Heart right ventricle (tissue), 16 donors: ENCODE measurements at regions of chr2 and their contacts with region 1.

Region 1: GRCh38 chr2:36613801-36614200 is 15.8 kb upstream of the FEZ2 start:
- DNase-seq: no peak
- ATAC-seq: no peak
- H3K4me3 ChIP-seq: no peak overlapping the region
- H3K27ac ChIP-seq: no peak overlapping the region
- H3K4me1 ChIP-seq: no peaks in the 10 kb centered on the region
- H3K27me3 ChIP-seq: no peaks in the 10 kb centered on the region
- CTCF ChIP-seq: no peak

Region 2: DNA sequence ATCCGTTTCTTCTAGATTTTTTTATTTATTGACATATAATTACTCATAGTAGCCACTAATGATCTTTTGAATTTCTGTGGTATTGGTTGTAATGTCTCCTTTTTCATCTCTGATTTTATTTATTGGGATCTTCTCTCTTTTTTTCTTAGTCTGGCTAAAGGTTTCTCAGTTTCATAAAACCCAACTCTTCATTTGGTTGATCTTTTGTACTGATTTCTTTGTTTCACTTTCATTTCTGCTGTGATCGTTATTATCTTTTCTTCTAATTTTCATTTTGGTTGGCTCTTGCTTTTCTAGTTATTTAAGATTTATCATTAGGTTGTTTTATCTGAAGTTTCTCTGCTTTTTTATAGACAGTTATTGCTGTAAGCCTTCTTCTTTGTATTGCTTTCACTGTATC is 721.9 kb before region 1 on chr2:
- intact Hi-C with region 1: no loop called
- DNase-seq: no peak
- ATAC-seq: no peak
- H3K4me3 ChIP-seq: no peak overlapping the region
- H3K27ac ChIP-seq: no peak overlapping the region
- H3K4me1 ChIP-seq: no peaks in the 10 kb centered on the region
- H3K27me3 ChIP-seq: no peaks in the 10 kb centered on the region
- CTCF ChIP-seq: no peak

Region 3: GRCh38 chr2:36574560-36574959 is 39.2 kb before region 1 on chr2:
- intact Hi-C with region 1: loop called in 1 of 10 experiments (anchors 1 kb)
- DNase-seq: no peak
- ATAC-seq: no peak
- H3K4me3 ChIP-seq: no peak overlapping the region
- H3K27ac ChIP-seq: no peak overlapping the region
- H3K4me1 ChIP-seq: peaks cover 0 to 3% (median 0%) of the 10 kb centered on the region in 9 donors
- H3K27me3 ChIP-seq: no peaks in the 10 kb centered on the region
- CTCF ChIP-seq: no peak